ENCODE measurements at regions of chr19 and their contacts with region 1.

Region 1: DNA sequence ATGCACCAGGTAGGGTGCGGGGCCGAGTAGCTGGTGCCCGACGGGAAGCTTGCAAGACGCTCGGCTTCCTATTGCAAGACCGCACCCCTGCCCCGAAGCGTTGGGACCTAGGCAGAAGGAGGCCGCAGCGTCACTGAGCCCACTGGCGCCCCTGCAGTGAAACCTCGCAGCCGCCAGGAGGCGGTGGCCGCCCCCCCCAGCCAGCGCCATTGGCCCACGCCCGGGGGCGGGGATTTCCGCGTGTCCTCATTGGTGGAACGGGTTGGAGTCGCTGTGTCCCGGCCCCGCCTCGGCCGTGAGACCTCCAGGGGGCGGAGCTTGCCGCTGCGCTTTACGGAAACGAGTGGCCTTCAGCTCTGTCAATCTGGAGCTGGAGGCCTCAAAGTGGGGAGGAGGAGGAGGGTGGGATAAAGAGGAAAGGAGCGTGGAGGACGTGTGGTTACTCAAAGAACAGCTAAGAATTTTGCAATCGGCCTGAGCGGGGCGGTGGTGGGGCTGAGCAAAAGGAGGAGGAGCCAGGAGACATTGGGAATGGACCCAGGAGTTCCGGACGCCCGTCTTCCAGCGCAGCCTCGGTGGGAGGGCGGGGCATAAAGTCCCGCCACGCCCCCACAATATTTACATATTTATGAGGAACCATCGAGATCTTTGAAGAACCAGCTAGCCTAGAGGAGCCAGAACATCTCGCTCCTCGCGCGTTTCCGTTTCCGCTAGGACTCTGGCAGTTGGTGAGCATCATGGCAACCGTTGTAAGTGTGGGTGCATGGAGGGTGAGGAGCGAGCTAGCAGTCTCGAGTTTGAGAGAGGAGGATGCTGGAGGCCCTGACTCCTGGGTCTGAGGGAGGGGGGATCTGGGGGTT is at the starts of genes GYS1 and RUVBL2:
- DNase-seq: peak; percentile 98 to 100
- ATAC-seq: peak; percentile 73 to 75
- H3K4me3 ChIP-seq: peak within 1 kb of the TSS; percentile 75 to 99 (median 84)
- H3K27ac ChIP-seq: peak within 1 kb of the TSS; percentile 93 to 100 (median 99)
- H3K4me1 ChIP-seq: peaks cover 44 to 51% of the 10 kb centered on the region in 2 donors
- H3K27me3 ChIP-seq: no peaks in the 10 kb centered on the region
- CTCF ChIP-seq: peak; percentile 98 to 99 (median 99)
- POLR2A ChIP-seq: peak; percentile 98 to 99
- total RNA-seq, gene GYS1: 110 to 221 (median 126) TPM
- total RNA-seq, gene RUVBL2: 134 to 185 (median 146) TPM

Region 2: DNA sequence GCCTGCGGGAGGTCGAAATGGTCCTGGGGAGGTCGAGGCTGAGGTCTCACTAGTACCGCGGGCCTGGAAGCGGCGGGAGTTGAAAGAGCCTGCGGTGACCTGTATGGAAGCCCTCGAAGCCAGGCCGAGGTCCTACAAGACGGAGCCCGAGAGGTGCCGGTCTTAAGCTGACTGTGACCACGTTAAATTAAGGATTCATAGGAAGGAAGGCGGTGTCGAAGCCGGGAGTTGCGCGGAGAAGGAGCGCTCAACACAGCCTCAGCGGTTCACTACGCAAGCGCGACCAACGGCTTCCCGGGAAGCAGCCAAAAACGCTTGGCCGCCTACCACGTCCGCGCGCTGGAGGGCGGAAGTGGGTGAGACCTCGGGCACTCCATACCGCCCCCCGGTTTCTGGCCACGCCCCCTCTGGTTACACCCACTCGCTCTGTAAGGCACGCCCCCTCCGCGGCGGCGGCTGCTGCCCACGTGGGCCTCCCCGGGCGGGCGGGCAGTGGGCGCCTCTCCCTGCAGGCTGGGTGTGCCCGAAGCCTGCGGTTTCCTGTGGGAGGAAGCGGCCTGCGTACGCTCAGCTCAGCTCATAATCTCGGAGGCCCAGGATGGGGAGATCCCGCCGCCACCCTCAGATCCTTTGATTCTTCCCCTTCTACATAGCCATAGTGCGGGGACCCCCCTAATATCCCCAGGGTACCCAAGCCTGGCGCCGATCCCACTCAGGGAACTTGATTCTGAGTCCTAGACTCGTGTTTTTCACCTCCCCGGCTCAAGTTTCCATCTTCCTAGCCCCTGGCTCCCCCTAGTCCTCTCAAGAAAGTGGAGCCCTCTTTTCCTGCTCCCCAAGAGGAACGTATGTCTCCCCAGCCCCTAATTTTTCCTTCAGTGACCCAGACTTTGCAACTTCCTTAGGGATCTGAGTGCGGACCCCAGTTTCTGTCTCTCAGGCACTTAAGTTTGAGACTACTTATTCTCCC is 671.5 kb before region 1 on chr19:
- in situ Hi-C with region 1: no loop called
- intact Hi-C with region 1: loop called (anchors 10 kb)
- DNase-seq: peak; percentile 97
- ATAC-seq: peak; percentile 85 to 92
- H3K4me3 ChIP-seq: peak overlapping the region; percentile 60 to 83 (median 77)
- H3K27ac ChIP-seq: peak overlapping the region; percentile 85 to 100 (median 98)
- H3K4me1 ChIP-seq: peaks cover 18 to 29% of the 10 kb centered on the region in 2 donors
- H3K27me3 ChIP-seq: no peaks in the 10 kb centered on the region
- CTCF ChIP-seq: peak in 1 of 5 experiments; percentile 31
- POLR2A ChIP-seq: peak; percentile 67 to 81

Region 3: DNA sequence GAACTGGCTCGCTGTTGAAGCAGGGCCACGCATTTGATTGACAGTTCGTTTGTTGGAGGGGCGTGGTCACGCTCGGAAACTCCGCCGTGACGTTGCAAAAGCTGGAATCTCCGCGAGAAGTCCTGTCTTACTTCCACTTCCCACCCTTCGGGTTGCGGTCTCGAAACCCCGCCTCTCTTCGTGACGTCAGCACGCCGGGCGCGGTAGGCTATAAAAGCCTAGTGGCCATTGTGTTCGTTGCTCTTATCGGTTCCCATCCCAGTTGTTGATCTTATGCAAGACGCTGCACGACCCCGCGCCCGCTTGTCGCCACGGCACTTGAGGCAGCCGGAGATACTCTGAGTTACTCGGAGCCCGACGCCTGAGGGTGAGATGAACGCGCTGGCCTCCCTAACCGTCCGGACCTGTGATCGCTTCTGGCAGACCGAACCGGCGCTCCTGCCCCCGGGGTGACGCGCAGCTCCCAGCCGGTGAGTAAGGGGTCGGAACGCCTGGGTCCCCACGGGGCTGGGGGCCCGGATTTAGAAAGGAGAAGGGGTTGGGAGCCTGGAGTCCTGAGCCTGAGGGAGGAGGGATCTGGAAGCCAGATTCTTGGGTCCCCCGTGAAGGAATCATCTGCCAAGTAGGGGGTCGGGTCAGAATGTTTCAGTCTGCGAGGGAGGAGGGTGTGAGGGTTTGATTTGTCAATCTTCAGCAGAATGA is 121.1 kb before region 1 on chr19 and contains the start of gene PPP1R15A:
- in situ Hi-C with region 1: no loop called
- intact Hi-C with region 1: loop called (anchors 1 kb)
- DNase-seq: peak; percentile 96 to 99
- ATAC-seq: peak; percentile 71 to 72
- H3K4me3 ChIP-seq: peak within 1 kb of the TSS; percentile 85 to 100 (median 93)
- H3K27ac ChIP-seq: peak within 1 kb of the TSS; percentile 94 to 100 (median 99)
- H3K4me1 ChIP-seq: peaks cover 33 to 41% of the 10 kb centered on the region in 2 donors
- H3K27me3 ChIP-seq: no peaks in the 10 kb centered on the region
- CTCF ChIP-seq: peak in 4 of 5 experiments; percentile 10 to 67 (median 36)
- POLR2A ChIP-seq: peak; percentile 99 to 100
- total RNA-seq, gene PPP1R15A: 28.7 to 73.9 (median 39.8) TPM

Region 4: GRCh38 chr19:49073514-49074378 is 80.3 kb after region 1 on chr19:
- in situ Hi-C with region 1: no loop called
- intact Hi-C with region 1: loop called (anchors 5 kb)
- DNase-seq: peak; percentile 47 to 86
- ATAC-seq: peak; percentile 72 to 80
- H3K4me3 ChIP-seq: peak overlapping the region; percentile 14 to 52 (median 48)
- H3K27ac ChIP-seq: peak overlapping the region; percentile 85 to 95 (median 92)
- H3K4me1 ChIP-seq: peaks cover 14 to 24% of the 10 kb centered on the region in 2 donors
- H3K27me3 ChIP-seq: no peaks in the 10 kb centered on the region
- CTCF ChIP-seq: peak; percentile 27 to 60 (median 55)
- POLR2A ChIP-seq: peak; percentile 46 to 49

Region 5: DNA sequence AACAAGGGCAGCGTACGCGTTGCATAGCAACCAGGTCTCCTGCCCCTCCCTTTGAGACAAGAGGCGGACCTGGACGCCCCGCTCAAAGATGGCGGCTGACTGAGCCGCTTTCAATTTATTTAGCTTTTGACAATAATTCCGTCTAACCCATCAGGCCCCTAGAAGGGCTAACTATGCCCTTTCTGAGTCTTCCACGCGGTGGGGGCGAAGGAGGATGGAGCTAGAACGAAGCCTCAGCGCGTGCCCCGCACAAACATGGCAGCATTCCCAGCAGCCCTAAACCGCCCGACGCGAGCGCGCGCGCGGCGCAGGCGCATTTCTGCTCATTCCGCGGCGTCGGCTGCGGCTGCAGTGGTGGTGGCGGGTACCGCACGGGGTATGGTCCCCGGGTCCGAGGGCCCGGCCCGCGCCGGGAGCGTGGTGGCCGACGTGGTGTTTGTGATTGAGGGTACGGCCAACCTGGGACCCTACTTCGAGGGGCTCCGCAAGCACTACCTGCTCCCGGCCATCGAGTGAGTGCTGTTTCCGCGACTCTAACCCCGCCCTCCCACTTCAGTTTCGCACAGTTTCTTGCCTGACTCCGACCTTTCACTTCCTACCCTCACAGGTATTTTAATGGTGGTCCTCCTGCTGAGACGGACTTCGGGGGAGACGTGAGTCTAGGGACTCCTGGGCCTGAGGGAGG is 824.7 kb after region 1 on chr19 and contains the start of gene MED25:
- in situ Hi-C with region 1: no loop called
- intact Hi-C with region 1: loop called (anchors 10 kb)
- DNase-seq: peak; percentile 73 to 83
- ATAC-seq: peak; percentile 71 to 72
- H3K4me3 ChIP-seq: peak within 1 kb of the TSS; percentile 78 to 96 (median 86)
- H3K27ac ChIP-seq: peak within 1 kb of the TSS; percentile 94 to 99 (median 97)
- H3K4me1 ChIP-seq: peaks cover 17 to 23% of the 10 kb centered on the region in 2 donors
- H3K27me3 ChIP-seq: no peaks in the 10 kb centered on the region
- CTCF ChIP-seq: peak in 3 of 5 experiments; percentile 35 to 65 (median 54)
- POLR2A ChIP-seq: peak; percentile 90 to 97
- total RNA-seq, gene MED25: 46.6 to 105 (median 78.7) TPM